CD4-positive, alpha-beta T cell (primary cell): ENCODE measurements at regions of chr7 and their contacts with region 1.

Region 1: GRCh38 chr7:30062591-30062990 is 34.4 kb downstream of the PLEKHA8 start:
- DNase-seq: peak in 3 of 14 experiments; percentile 29 to 44 (median 38)
- ATAC-seq: peak; percentile 61
- H3K4me3 ChIP-seq: no peak overlapping the region
- H3K4me3 Mint-ChIP-seq: no peak overlapping the region
- H3K27ac ChIP-seq: no peak overlapping the region
- H3K27ac Mint-ChIP-seq: no peak overlapping the region
- H3K4me1 ChIP-seq: no peaks in the 10 kb centered on the region
- H3K4me1 Mint-ChIP-seq: peaks cover 21% of the 10 kb centered on the region
- H3K27me3 ChIP-seq: no peaks in the 10 kb centered on the region
- H3K27me3 Mint-ChIP-seq: no peaks in the 10 kb centered on the region
- CTCF ChIP-seq: peak; percentile 65

Region 2: GRCh38 chr7:29749701-29750321 is 312.8 kb before region 1 on chr7:
- CTCF ChIA-PET with region 1: no interaction called
- POLR2A ChIA-PET with region 1: no interaction called
- intact Hi-C with region 1: loop called in 1 of 2 experiments (anchors 10 kb)
- DNase-seq: no peak
- ATAC-seq: no peak
- H3K4me3 ChIP-seq: no peak overlapping the region
- H3K4me3 Mint-ChIP-seq: no peak overlapping the region
- H3K27ac ChIP-seq: no peak overlapping the region
- H3K27ac Mint-ChIP-seq: no peak overlapping the region
- H3K4me1 ChIP-seq: no peaks in the 10 kb centered on the region
- H3K4me1 Mint-ChIP-seq: no peaks in the 10 kb centered on the region
- H3K27me3 ChIP-seq: no peaks in the 10 kb centered on the region
- H3K27me3 Mint-ChIP-seq: no peaks in the 10 kb centered on the region
- CTCF ChIP-seq: no peak

Region 3: DNA sequence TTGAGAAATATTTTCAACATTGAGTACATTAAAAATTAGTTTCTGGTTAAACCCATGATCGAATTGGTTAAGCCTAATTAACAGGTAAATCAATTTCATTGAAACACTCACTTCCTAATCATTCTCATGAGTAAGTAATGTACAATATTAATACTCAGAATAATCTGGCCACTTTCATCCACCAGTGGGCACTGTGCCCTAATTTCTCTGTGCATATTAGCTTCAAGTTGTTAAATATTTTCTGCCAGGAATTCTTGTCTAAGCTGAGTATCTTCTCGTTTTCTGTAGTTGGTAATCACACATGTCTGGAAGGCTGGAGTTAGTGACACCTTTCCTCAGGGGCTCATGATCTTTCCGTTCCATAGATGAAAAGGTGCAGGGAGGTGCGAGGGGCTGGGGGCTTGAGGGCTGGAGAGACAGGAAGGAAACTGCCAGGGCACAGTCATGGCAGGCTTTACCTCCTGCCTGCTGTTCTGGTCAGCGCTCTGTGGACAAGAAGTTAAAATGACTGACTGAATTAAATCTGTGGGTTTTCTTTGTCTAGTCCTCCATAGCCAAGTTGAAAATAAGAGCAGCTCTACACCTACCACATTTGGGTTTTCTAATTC is 184.4 kb before region 1 on chr7:
- CTCF ChIA-PET with region 1: no interaction called
- POLR2A ChIA-PET with region 1: no interaction called
- intact Hi-C with region 1: loop called (anchors 1 to 5 kb)
- DNase-seq: peak in 8 of 14 experiments; percentile 10 to 54 (median 26)
- ATAC-seq: no peak
- H3K4me3 ChIP-seq: no peak overlapping the region
- H3K4me3 Mint-ChIP-seq: no peak overlapping the region
- H3K27ac ChIP-seq: no peak overlapping the region
- H3K27ac Mint-ChIP-seq: no peak overlapping the region
- H3K4me1 ChIP-seq: no peaks in the 10 kb centered on the region
- H3K4me1 Mint-ChIP-seq: peaks cover 11% of the 10 kb centered on the region
- H3K27me3 ChIP-seq: peaks cover 0 to 1% of the 10 kb centered on the region in 2 experiments
- H3K27me3 Mint-ChIP-seq: peaks cover 10% of the 10 kb centered on the region
- CTCF ChIP-seq: peak; percentile 51